KBM-7 (cell line): ENCODE measurements at regions of chr4 and their contacts with region 1.

Region 1: GRCh38 chr4:147617173-147617840 is at the start of gene TMEM184C:
- DNase-seq: peak; percentile 99

Region 2: GRCh38 chr4:147866532-147867271 is 249.4 kb after region 1 on chr4:
- in situ Hi-C with region 1: loop called (anchors 25 kb)
- DNase-seq: peak; percentile 87